ENCODE measurements at regions of chr11 and their contacts with region 1.

Region 1: GRCh38 chr11:9473408-9473807 is 12.6 kb downstream of the ZNF143 start:
- DNase-seq: no peak
- ATAC-seq: no peak

Region 2: GRCh38 chr11:8477680-8478079 is 995.7 kb before region 1 on chr11:
- intact Hi-C with region 1: loop called (anchors 10 kb)
- DNase-seq: no peak
- ATAC-seq: no peak